Posterior cingulate gyrus (tissue), 11 donors: ENCODE measurements at regions of chr16 and their contacts with region 1.

Region 1: GRCh38 chr16:89171463-89172170 is at the start of gene CDH15:
- DNase-seq: peak; percentile 66 to 98 (median 84)

Region 2: DNA sequence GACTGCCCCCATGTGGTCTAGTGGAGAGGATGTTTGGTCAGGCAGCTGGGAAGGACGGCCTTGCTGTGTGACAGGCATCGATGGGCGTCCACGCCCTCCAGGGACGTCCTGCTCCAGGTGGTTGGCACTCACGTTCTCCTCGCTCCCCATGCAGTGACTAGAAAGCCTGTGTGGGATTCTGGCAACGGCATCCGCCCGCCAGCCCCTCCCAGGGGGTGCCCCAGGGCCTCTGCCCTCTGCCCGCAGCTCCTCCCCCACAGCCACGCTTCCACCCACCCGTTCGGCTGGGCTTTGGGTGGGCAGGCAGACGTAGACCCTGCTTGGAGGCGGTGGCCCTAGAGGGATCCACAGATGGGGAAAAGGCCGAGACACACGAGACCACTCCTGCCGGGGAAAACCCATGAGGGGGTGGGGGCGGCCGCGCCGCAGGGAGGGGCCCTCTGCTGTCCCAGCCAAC is 537.9 kb before region 1 on chr16:
- intact Hi-C with region 1: loop called (anchors 10 kb)
- DNase-seq: no peak

Region 3: DNA sequence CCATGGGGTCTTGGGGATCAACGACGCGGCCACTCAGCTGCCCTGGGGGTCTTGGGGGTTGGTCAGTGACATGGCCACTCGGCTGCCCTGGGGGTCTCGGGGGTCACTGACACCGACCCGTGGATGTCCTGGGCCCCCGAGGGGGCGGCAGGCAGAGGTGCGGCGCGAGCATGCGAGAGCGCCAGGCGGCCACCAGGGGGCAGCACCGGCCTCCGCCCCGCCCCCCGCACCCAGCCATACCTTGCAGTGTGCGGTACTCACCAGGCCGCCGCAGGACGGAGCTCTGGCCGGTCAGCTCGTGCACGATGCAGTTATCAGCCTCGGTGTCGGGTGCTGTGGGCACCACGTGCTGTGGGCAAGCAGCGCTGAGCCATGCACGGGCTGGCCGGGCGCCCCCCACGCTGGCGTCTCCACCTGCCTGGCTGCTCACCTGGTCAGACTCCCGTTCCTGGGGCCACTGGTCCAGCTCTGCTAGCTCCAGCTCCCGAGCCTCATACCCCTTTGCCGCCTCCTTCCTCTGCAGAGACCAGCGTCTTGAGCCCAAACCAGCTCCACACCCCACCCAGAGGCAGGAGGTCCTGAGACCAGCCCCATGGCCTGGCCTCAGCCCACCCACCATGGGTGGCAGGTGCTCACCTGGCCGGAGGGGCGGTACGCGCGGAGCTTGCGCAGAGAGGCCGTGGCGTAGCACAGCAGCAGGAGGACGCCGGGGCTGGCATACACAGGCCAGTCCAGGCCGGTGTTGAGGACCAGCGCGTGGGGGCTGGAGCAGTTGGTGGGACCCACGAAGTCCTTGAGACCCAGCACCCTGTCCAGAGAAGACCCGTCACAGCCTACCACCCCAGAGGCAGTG is 434.1 kb before region 1 on chr16:
- intact Hi-C with region 1: loop called (anchors 5 kb)
- DNase-seq: peak in 9 of 10 donors; percentile 50 to 95 (median 78)

Region 4: DNA sequence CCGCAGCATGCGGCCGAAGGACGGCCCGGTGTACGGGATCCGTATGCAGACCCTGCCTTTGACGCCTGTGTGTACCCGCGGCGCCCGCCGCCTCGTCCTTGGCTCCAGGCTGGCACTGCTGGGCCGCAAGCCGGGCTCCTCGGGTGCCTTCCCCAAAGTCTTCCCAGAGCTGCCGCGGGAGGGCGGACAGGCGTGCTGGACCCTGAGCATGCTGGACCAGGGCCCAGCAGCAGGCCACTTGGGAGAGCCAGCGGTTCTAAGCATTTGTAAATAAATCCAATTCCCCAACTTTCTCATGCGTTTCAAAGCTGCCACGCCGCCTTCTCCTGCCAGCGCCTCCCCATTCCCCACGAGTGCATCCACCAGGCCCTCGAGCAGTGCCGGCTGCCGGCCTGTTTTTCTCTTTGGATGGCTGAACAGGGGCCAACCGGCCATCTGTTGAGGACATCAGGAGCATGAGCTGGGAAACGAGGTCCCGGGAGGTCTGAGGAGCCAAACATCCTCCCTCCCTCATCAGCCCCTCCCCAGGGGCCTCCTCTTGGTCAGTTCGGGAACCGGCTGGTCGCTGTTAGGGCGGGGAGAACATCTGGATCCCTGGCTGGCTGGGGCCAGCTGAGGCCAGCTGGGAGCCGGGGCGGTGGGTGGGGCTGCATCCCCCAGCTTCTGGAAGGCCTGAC is 284.6 kb before region 1 on chr16:
- intact Hi-C with region 1: no loop called
- DNase-seq: no peak

Region 5: GRCh38 chr16:88941913-88942909 is 229.4 kb before region 1 on chr16:
- intact Hi-C with region 1: loop called (anchors 2 kb)
- DNase-seq: peak in 3 of 10 donors; percentile 45 to 50 (median 48)